ENCODE measurements at regions of chr10 and their contacts with region 1.

Region 1: GRCh38 chr10:100009793-100010676 is at the start of gene DNMBP:
- DNase-seq: peak; percentile 89 to 94 (median 91)
- ATAC-seq: peak; percentile 80 to 96 (median 94)
- H3K4me3 ChIP-seq: peak within 1 kb of the TSS; percentile 62 to 99 (median 84)
- H3K27ac ChIP-seq: peak within 1 kb of the TSS; percentile 55 to 92 (median 84)
- H3K4me1 ChIP-seq: peaks cover 0 to 52% (median 32%) of the 10 kb centered on the region in 12 donors
- H3K27me3 ChIP-seq: no peaks in the 10 kb centered on the region
- CTCF ChIP-seq: peak; percentile 28 to 68 (median 55)
- POLR2A ChIP-seq: peak in 1 of 2 donors; percentile 48
- total RNA-seq, gene DNMBP: 3.9 to 11.5 (median 7.2) TPM

Region 2: DNA sequence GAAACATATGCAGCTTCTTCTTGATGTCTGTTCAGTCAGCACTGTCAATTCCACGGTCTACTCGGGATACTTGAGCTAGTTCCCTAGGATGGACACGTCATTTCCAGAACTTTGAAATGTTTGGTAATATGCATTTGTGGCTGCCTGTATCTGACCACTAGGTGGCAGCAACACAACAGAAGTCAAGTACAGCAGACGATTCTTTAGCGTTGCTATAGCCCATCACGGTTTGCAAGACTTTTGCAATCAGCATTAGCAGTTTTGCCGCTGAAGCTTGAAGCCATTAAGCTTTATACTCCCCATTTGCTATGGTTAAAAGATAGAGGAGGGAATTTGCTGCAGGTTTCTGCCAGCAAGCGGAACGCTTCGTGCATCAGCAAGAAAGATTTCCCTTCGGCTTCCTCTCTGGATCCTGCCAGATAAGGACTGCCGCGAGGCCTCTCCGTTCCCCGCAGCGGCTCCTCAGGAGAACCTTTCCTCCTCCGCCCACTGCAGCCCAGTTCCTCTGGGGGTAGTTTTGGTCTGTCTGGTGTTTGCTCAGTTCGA is 164.1 kb before region 1 on chr10:
- intact Hi-C with region 1: loop called in 8 of 10 experiments (anchors 1 to 10 kb)
- DNase-seq: peak in 4 of 5 donors; percentile 62 to 79 (median 74)
- ATAC-seq: peak; percentile 84 to 97 (median 91)
- H3K4me3 ChIP-seq: peak overlapping the region in 11 of 12 donors; percentile 0 to 53 (median 39)
- H3K27ac ChIP-seq: peak overlapping the region in 1 of 12 donors; percentile 40
- H3K4me1 ChIP-seq: peaks cover 0 to 20% (median 2%) of the 10 kb centered on the region in 12 donors
- H3K27me3 ChIP-seq: no peaks in the 10 kb centered on the region
- CTCF ChIP-seq: peak; percentile 89 to 97 (median 93)
- POLR2A ChIP-seq: no peak

Region 3: DNA sequence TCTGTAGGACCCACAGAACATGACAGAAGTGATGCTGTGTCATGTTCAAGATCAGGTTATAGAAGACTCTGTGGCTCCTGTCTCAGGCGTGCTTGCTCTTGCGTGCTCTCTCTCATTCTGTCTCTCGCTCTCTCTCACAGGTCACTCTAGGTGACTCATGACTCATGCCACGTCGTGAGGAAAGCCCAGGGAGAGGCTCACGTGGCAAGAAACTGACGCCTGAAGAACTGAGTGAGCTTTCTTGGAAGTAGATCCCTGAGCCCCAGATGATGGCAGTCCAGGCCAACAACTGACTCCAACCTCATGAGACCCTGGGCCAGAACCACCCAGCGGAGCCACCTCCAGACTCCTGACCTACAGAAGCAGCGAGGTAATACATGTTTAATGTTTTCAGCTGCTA is 103.6 kb before region 1 on chr10:
- intact Hi-C with region 1: loop called in 6 of 10 experiments (anchors 5 to 10 kb)
- DNase-seq: peak in 3 of 5 donors; percentile 11 to 37 (median 37)
- ATAC-seq: peak in 3 of 4 donors; percentile 58 to 89 (median 68)
- H3K4me3 ChIP-seq: no peak overlapping the region
- H3K27ac ChIP-seq: no peak overlapping the region
- H3K4me1 ChIP-seq: no peaks in the 10 kb centered on the region
- H3K27me3 ChIP-seq: no peaks in the 10 kb centered on the region
- CTCF ChIP-seq: peak in 1 of 12 donors; percentile 16
- POLR2A ChIP-seq: no peak

Region 4: DNA sequence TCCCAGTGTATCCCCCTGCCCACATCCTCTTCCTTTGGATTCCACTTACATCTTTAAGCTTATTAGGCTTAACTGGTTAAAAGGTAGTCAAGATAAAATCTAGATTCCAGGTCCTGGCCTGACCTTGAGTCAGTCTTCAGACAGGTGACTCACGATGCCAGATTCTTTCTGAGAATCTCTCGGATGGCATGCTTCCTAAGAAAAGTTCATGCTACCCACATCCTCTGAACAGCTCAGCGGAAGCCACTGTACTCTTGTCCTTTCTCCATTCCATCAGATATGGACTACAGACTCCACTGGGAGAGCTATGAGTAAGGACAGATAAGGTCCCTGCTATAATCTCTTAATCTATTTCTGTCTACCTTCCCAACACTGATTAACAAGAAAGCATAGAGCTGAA is 43.7 kb before region 1 on chr10:
- intact Hi-C with region 1: loop called in 2 of 10 experiments (anchors 5 kb)
- DNase-seq: no peak
- ATAC-seq: peak in 2 of 4 donors; percentile 16 to 39
- H3K4me3 ChIP-seq: no peak overlapping the region
- H3K27ac ChIP-seq: peak overlapping the region in 5 of 12 donors; percentile 5 to 53 (median 34)
- H3K4me1 ChIP-seq: peaks cover 0 to 37% (median 17%) of the 10 kb centered on the region in 12 donors
- H3K27me3 ChIP-seq: no peaks in the 10 kb centered on the region
- CTCF ChIP-seq: no peak
- POLR2A ChIP-seq: no peak

Region 5: DNA sequence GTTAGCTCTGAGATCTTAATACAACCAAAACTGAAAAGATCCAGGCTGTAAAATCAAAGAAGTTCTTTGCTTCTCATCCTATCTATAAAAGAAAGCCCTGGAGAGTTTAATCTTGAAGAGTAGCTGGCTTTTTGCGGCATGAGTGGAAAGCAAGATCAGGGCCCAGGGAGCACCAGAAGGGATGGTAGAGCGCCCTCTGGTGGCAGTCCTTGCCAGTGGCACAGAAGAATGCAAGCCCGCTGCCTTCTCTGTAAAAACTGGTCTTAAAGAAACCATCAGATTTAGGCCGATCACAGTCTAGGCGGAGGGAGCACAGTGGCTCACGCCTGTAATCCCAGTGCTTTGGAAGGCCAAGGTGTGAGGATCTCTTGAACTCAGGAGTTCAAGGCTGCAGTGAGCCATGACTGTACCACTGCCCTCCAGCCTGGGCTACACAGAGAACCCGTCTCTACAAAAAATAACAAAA is 36.0 kb after region 1 on chr10:
- intact Hi-C with region 1: loop called in 6 of 10 experiments (anchors 2 to 5 kb)
- DNase-seq: peak; percentile 85 to 92 (median 87)
- ATAC-seq: peak; percentile 65 to 79 (median 74)
- H3K4me3 ChIP-seq: no peak overlapping the region
- H3K27ac ChIP-seq: peak overlapping the region in 3 of 12 donors; percentile 14 to 80 (median 50)
- H3K4me1 ChIP-seq: peaks cover 0 to 33% (median 21%) of the 10 kb centered on the region in 12 donors
- H3K27me3 ChIP-seq: no peaks in the 10 kb centered on the region
- CTCF ChIP-seq: peak; percentile 91 to 98 (median 96)
- POLR2A ChIP-seq: no peak

Measured in heart left ventricle (tissue), 16 donors.